GM12878 (cell line): ENCODE measurements at regions of chr2 and their contacts with region 1.

Region 1: DNA sequence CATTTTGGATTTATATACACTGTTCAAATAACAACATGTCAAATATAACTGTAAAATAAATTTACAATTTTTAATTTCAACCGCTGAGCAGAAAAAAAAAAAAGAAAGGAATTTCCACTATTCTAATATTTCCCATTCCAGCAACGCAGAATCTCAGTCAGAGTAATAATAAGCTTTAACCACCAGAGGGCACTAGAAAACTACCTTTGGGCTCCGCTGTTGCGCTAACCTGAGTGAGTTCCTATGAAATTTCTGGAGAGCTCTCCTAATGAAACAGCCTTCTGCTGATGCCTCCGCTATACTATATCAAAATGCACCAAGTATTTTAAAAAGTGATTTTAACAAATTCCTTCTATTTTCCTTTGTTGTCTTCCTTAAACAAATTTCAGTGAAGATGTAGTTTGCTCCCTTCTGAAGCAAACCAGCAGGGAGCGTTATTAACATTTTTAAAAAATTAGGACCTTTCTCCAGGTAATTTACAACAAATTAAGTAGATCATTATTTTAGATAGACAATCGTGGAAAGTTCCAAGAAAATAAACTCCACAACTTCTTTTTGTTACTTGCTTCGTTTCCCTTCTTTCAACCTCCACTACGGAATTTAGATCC is 23.0 kb downstream of the ERMN start:
- DNase-seq: peak; percentile 21
- ATAC-seq: peak; percentile 82
- H3K4me3 ChIP-seq: no peak overlapping the region
- H3K27ac ChIP-seq: no peak overlapping the region
- H3K4me1 ChIP-seq: no peaks in the 10 kb centered on the region
- H3K27me3 ChIP-seq: peaks cover 0 to 2% of the 10 kb centered on the region in 2 experiments; a peak in 2 of 4 replicates
- CTCF ChIP-seq: peak; percentile 55 to 71 (median 62)
- EP300 ChIP-seq: no peak
- POLR2A ChIP-seq: no peak
- RAD21 ChIP-seq: peak; percentile 93

Region 2: DNA sequence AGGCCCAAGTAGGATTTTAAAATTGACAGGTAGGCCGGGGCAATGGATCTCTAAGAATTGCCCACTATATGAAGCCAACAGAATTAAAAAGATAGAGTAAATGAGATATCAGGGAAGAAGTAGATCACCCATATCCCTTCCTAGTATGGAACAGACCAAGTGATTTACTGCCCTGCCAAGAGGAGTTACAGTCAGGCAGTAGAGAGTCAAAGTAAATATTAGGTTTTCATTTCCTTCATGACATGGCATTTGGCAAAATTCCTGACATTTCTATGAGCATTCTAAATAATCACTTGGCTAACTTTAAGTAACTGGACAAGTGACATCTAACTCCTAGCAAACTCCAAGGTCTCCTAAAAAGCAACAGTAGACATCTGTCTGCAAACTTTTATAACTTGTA is 11.6 kb before region 1 on chr2:
- CTCF ChIA-PET with region 1: interaction called, 14 read pairs
- POLR2A ChIA-PET with region 1: no interaction called
- RAD21 ChIA-PET with region 1: interaction called, 9 read pairs
- SMC1A ChIA-PET with region 1: interaction called, 41 read pairs
- in situ Hi-C with region 1: no loop called
- intact Hi-C with region 1: no loop called
- DNase-seq: no peak
- ATAC-seq: no peak
- H3K4me3 ChIP-seq: no peak overlapping the region
- H3K27ac ChIP-seq: no peak overlapping the region
- H3K4me1 ChIP-seq: no peaks in the 10 kb centered on the region
- H3K27me3 ChIP-seq: peaks cover 0 to 3% of the 10 kb centered on the region in 2 experiments; a peak in 2 of 4 replicates
- CTCF ChIP-seq: no peak
- EP300 ChIP-seq: no peak
- POLR2A ChIP-seq: no peak
- RAD21 ChIP-seq: no peak

Region 3: DNA sequence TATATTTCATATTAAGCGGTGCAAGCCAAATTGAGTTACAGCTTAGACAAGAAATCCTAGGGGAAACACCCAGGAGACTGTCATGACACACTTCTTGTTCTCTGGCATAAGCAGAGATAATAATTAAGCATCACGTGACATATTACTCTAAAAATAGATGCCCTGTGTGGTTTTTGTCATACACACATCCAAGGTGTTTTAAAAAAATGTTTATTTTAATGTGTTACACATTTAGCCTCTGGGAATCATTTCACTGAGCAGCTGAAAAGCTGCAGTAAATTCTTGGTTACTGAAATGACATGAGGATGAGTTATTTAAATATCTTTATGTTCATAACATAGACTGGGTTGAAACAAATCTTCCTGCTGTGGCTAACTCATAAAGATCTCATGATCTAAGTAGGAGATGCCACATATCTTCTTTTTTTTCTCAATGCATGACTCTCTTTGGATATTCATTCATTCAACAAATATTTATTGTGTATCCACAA is 61.1 kb after region 1 on chr2:
- CTCF ChIA-PET with region 1: interaction called, 7 read pairs
- POLR2A ChIA-PET with region 1: no interaction called
- RAD21 ChIA-PET with region 1: interaction called, 3 read pairs
- SMC1A ChIA-PET with region 1: interaction called, 10 read pairs
- in situ Hi-C with region 1: no loop called
- intact Hi-C with region 1: no loop called
- DNase-seq: peak; percentile 50
- ATAC-seq: peak; percentile 72
- H3K4me3 ChIP-seq: no peak overlapping the region
- H3K27ac ChIP-seq: peak overlapping the region; percentile 56
- H3K4me1 ChIP-seq: peaks cover 14% of the 10 kb centered on the region
- H3K27me3 ChIP-seq: no peaks in the 10 kb centered on the region
- CTCF ChIP-seq: no peak
- EP300 ChIP-seq: no peak
- POLR2A ChIP-seq: no peak
- RAD21 ChIP-seq: no peak

Region 4: GRCh38 chr2:157460384-157460837 is 157.8 kb after region 1 on chr2:
- CTCF ChIA-PET with region 1: interaction called, 21 read pairs
- POLR2A ChIA-PET with region 1: no interaction called
- RAD21 ChIA-PET with region 1: interaction called, 8 read pairs
- SMC1A ChIA-PET with region 1: interaction called, 8 read pairs
- in situ Hi-C with region 1: no loop called
- intact Hi-C with region 1: no loop called
- DNase-seq: no peak
- ATAC-seq: no peak
- H3K4me3 ChIP-seq: no peak overlapping the region
- H3K27ac ChIP-seq: no peak overlapping the region
- H3K4me1 ChIP-seq: no peaks in the 10 kb centered on the region
- H3K27me3 ChIP-seq: no peaks in the 10 kb centered on the region
- CTCF ChIP-seq: no peak
- EP300 ChIP-seq: no peak
- POLR2A ChIP-seq: no peak
- RAD21 ChIP-seq: no peak

Region 5: DNA sequence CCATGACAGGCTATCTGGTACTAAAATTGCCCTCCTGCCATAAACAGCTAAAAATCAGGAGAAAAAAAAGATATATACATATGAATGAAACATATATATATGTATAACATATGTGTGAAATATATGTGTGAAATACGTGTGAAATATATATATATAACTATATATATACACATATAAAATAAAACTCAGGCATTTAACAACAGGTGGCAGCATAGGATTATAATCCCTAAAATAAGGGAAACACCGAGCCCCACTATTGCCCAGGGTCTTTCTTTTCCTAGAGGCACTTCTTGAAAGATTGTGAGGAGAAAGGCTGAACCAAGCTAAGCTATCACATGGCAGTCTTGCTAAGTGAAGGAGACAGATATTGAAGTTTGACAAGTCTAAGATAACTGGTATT is 207.1 kb after region 1 on chr2:
- CTCF ChIA-PET with region 1: interaction called, 14 read pairs
- POLR2A ChIA-PET with region 1: no interaction called
- RAD21 ChIA-PET with region 1: interaction called, 14 read pairs
- SMC1A ChIA-PET with region 1: interaction called, 14 read pairs
- in situ Hi-C with region 1: no loop called
- intact Hi-C with region 1: no loop called
- DNase-seq: no peak
- ATAC-seq: no peak
- H3K4me3 ChIP-seq: no peak overlapping the region
- H3K27ac ChIP-seq: no peak overlapping the region
- H3K4me1 ChIP-seq: no peaks in the 10 kb centered on the region
- H3K27me3 ChIP-seq: peaks cover 0 to 3% of the 10 kb centered on the region in 2 experiments; a peak in 1 of 4 replicates
- CTCF ChIP-seq: peak in 1 of 3 experiments; percentile 15; a peak in 1 of 6 replicates
- EP300 ChIP-seq: no peak
- POLR2A ChIP-seq: no peak
- RAD21 ChIP-seq: peak; percentile 34; the same call in 1 of the 2 replicates

Region 6: DNA sequence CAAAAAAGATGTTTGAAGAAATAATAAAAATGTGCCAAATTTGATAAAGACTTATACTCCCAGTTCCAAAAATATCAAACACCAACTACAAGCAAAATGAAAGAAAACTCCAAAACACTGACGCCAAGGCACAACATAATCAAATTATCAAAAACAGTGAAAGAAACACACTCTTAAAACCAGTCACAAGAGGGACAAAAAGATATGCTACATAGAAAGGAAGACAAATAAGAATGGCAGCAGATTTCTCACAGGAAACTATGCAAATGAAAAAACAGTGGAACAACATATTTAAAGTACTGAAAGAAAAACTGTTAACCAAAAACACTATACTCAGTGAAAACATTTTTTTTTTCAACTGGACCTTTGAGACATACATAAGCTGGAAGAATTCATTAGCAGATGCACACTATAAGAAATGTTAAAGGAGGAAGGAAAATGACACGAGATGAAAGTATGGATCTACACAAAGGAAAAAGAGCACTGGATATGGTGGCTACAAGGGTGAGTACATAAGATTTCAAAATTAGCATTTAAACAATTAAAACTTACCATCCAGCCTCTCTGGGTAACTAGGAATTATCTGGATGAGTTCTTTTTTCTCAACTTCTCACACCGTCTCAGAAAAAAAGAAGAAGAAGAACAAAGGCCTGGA is 420.1 kb after region 1 on chr2:
- CTCF ChIA-PET with region 1: no interaction called
- POLR2A ChIA-PET with region 1: no interaction called
- RAD21 ChIA-PET with region 1: no interaction called
- SMC1A ChIA-PET with region 1: no interaction called
- in situ Hi-C with region 1: no loop called
- intact Hi-C with region 1: no loop called
- DNase-seq: no peak
- ATAC-seq: no peak
- H3K4me3 ChIP-seq: no peak overlapping the region
- H3K27ac ChIP-seq: no peak overlapping the region
- H3K4me1 ChIP-seq: no peaks in the 10 kb centered on the region
- H3K27me3 ChIP-seq: no peaks in the 10 kb centered on the region
- CTCF ChIP-seq: no peak
- EP300 ChIP-seq: no peak
- POLR2A ChIP-seq: no peak
- RAD21 ChIP-seq: no peak

Region 7: GRCh38 chr2:158006961-158007719 is 704.5 kb after region 1 on chr2:
- CTCF ChIA-PET with region 1: interaction called, 71 read pairs
- POLR2A ChIA-PET with region 1: no interaction called
- RAD21 ChIA-PET with region 1: interaction called, 10 read pairs
- SMC1A ChIA-PET with region 1: interaction called, 43 read pairs
- in situ Hi-C with region 1: loop called (anchors 5 kb)
- intact Hi-C with region 1: loop called (anchors 1 kb)
- DNase-seq: no peak
- ATAC-seq: peak; percentile 72
- H3K4me3 ChIP-seq: no peak overlapping the region
- H3K27ac ChIP-seq: no peak overlapping the region
- H3K4me1 ChIP-seq: no peaks in the 10 kb centered on the region
- H3K27me3 ChIP-seq: peaks cover 0 to 3% of the 10 kb centered on the region in 2 experiments; a peak in 1 of 4 replicates
- CTCF ChIP-seq: 0 out of 6 replicates have a peak, but pooled peaks of 1 of the 3 experiments have one; percentile 12
- EP300 ChIP-seq: no peak
- POLR2A ChIP-seq: no peak
- RAD21 ChIP-seq: no peak